ENCODE measurements at regions of chr20 and their contacts with region 1.

Region 1: GRCh38 chr20:19802492-19803158 is 44.6 kb downstream of the RIN2 start:
- DNase-seq: peak; percentile 47
- ATAC-seq: peak; percentile 98
- H3K4me3 ChIP-seq: no peak overlapping the region
- H3K27ac ChIP-seq: no peak overlapping the region
- H3K4me1 ChIP-seq: peaks cover 0 to 7% of the 10 kb centered on the region in 2 experiments; a peak in 1 of 4 replicates
- H3K27me3 ChIP-seq: no peaks in the 10 kb centered on the region
- CTCF ChIP-seq: peak; percentile 44 to 75 (median 48); a peak in 5 of 6 replicates
- POLR2A ChIP-seq: no peak
- RAD21 ChIP-seq: peak; percentile 40

Region 2: GRCh38 chr20:19692685-19693119 is 109.9 kb before region 1 on chr20:
- CTCF ChIA-PET with region 1: no interaction called
- POLR2A ChIA-PET with region 1: no interaction called
- RAD21 ChIA-PET with region 1: no interaction called
- intact Hi-C with region 1: loop called (anchors 1 kb)
- DNase-seq: peak; percentile 37
- ATAC-seq: peak; percentile 66
- H3K4me3 ChIP-seq: no peak overlapping the region
- H3K27ac ChIP-seq: no peak overlapping the region
- H3K4me1 ChIP-seq: peaks cover 0 to 10% of the 10 kb centered on the region in 2 experiments; a peak in 2 of 4 replicates
- H3K27me3 ChIP-seq: no peaks in the 10 kb centered on the region
- CTCF ChIP-seq: peak; percentile 60 to 86 (median 81); a peak in 5 of 6 replicates
- POLR2A ChIP-seq: no peak
- RAD21 ChIP-seq: peak; percentile 65

Measured in HCT116 (cell line).